ENCODE measurements at regions of chrX and their contacts with region 1.

Region 1: DNA sequence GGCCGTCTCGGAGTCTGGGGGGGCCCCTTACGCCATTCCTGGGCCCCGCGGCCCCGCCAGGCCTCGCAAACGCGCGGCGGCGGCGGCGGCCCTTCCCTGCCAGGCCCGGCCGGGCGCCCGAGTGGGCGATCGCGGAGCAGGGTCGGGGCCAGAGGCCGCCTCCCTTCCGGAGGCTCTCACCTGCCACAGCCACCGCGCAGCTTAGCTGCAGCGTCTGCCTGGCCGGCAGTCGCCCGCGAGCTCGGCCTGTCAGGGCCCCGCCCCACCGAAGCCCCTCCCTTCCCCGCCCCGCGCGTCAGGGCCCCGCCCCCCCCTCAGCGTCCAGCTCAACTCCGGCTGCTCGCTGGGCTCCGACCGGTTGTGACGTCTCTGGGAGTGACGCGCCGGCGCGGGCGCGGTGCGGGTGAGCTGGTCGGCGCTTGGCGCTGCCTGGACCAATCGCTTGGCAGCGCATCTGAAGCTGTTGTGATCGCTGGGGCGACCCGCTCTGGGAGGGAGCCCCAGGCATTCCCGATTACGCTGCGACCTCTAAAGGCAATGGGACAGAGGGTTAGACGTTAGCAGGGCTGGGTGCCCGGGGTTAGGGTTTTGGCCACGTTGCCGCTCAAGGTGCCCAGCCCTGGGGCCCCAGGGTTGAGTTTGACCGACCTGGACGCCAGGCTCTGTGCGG is at the start of gene SLC10A3:
- DNase-seq: peak; percentile 83 to 92 (median 86)
- H3K4me3 ChIP-seq: peak within 1 kb of the TSS; percentile 42 to 57
- H3K4me3 Mint-ChIP-seq: peak within 1 kb of the TSS; percentile 87 to 93 (median 89)
- H3K27ac ChIP-seq: peak within 1 kb of the TSS; percentile 71
- H3K27ac Mint-ChIP-seq: peak within 1 kb of the TSS; percentile 90 to 97 (median 93)
- H3K4me1 ChIP-seq: peaks cover 28% of the 10 kb centered on the region
- H3K4me1 Mint-ChIP-seq: peaks cover 5 to 31% (median 16%) of the 10 kb centered on the region in 4 donors
- H3K27me3 ChIP-seq: no peaks in the 10 kb centered on the region
- H3K27me3 Mint-ChIP-seq: no peaks in the 10 kb centered on the region
- total RNA-seq, gene SLC10A3: 22.5 to 23.7 TPM

Region 2: GRCh38 chrX:154411322-154411980 is 79.1 kb before region 1 on chrX and contains the start of gene TAFAZZIN:
- CTCF ChIA-PET with region 1: no interaction called
- POLR2A ChIA-PET with region 1: interaction called, 23 read pairs
- intact Hi-C with region 1: no loop called
- DNase-seq: peak; percentile 70 to 76 (median 75)
- H3K4me3 ChIP-seq: peak within 1 kb of the TSS; percentile 42 to 51
- H3K4me3 Mint-ChIP-seq: peak within 1 kb of the TSS; percentile 87 to 98 (median 90)
- H3K27ac ChIP-seq: peak within 1 kb of the TSS; percentile 70
- H3K27ac Mint-ChIP-seq: peak within 1 kb of the TSS; percentile 90 to 95 (median 94)
- H3K4me1 ChIP-seq: peaks cover 10% of the 10 kb centered on the region
- H3K4me1 Mint-ChIP-seq: peaks cover 4 to 24% (median 11%) of the 10 kb centered on the region in 4 donors
- H3K27me3 ChIP-seq: no peaks in the 10 kb centered on the region
- H3K27me3 Mint-ChIP-seq: no peaks in the 10 kb centered on the region
- total RNA-seq, gene TAFAZZIN: 139 to 141 TPM

Region 3: DNA sequence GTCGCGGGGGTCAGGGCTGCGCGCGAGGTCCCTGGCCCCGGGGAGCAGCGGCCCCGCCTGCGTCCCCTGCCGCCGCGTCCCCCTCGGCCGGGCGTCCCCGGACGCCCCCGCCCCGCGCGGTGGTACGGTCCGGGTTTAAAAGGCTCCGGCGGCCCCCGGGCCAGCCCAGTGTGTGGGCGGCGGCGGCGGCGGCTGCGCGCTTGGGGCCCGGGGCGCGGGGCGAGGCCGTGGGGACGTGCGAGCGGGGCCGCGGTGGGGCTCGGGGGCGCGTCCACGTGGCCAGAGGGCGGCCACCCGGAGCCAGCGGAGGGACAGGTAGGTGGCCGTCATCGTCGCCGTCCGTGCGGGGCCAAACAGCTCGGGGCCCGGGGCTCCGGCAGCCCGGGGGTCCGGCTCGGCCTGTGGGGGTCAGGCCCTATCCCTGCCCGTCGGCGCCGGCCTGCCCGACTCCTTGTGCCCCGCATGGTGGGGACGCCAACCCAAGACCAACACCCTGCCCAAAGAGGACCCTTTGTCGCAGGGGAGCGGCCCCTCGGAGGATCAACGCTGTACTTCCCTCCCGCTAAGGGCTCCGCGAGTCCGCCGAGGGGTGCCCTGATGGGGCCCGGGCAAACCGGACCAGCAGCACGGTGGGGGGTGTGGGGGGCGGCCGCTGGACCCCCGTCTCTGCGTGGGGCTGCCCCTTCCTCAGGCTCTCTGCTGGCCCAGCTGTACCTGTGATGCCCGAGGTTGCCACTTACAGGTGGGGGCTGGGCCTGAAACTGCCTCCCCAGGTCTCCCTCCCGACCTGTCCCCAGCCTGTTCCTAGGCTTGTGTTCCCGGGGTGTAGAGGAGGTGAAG is 32.2 kb before region 1 on chrX and contains the start of gene PLXNA3:
- CTCF ChIA-PET with region 1: no interaction called
- POLR2A ChIA-PET with region 1: interaction called, 37 read pairs
- intact Hi-C with region 1: loop called (anchors 2 kb)
- DNase-seq: peak in 4 of 5 donors; percentile 70 to 79 (median 74)
- H3K4me3 ChIP-seq: peak within 1 kb of the TSS; percentile 17 to 55
- H3K4me3 Mint-ChIP-seq: peak within 1 kb of the TSS; percentile 89 to 97 (median 94)
- H3K27ac ChIP-seq: peak within 1 kb of the TSS; percentile 55
- H3K27ac Mint-ChIP-seq: peak within 1 kb of the TSS; percentile 74 to 97 (median 95)
- H3K4me1 ChIP-seq: peaks cover 9% of the 10 kb centered on the region
- H3K4me1 Mint-ChIP-seq: peaks cover 4 to 19% (median 6%) of the 10 kb centered on the region in 4 donors
- H3K27me3 ChIP-seq: no peaks in the 10 kb centered on the region
- H3K27me3 Mint-ChIP-seq: no peaks in the 10 kb centered on the region
- total RNA-seq, gene PLXNA3: 78.8 to 90.3 TPM

Region 4: GRCh38 chrX:154515878-154516655 is 25.5 kb after region 1 on chrX and contains the start of gene FAM3A:
- CTCF ChIA-PET with region 1: no interaction called
- POLR2A ChIA-PET with region 1: interaction called, 29 read pairs
- intact Hi-C with region 1: loop called (anchors 1 kb)
- DNase-seq: peak; percentile 87 to 90 (median 89)
- H3K4me3 ChIP-seq: peak within 1 kb of the TSS; percentile 42 to 56
- H3K4me3 Mint-ChIP-seq: peak within 1 kb of the TSS; percentile 83 to 88 (median 85)
- H3K27ac ChIP-seq: peak within 1 kb of the TSS; percentile 81
- H3K27ac Mint-ChIP-seq: peak within 1 kb of the TSS; percentile 74 to 95 (median 92)
- H3K4me1 ChIP-seq: peaks cover 18% of the 10 kb centered on the region
- H3K4me1 Mint-ChIP-seq: peaks cover 10 to 30% (median 17%) of the 10 kb centered on the region in 4 donors
- H3K27me3 ChIP-seq: no peaks in the 10 kb centered on the region
- H3K27me3 Mint-ChIP-seq: no peaks in the 10 kb centered on the region
- total RNA-seq, gene FAM3A: 51.0 to 51.8 TPM